CD8-positive, alpha-beta T cell (primary cell): ENCODE measurements at regions of chr7 and their contacts with region 1.

Region 1: DNA sequence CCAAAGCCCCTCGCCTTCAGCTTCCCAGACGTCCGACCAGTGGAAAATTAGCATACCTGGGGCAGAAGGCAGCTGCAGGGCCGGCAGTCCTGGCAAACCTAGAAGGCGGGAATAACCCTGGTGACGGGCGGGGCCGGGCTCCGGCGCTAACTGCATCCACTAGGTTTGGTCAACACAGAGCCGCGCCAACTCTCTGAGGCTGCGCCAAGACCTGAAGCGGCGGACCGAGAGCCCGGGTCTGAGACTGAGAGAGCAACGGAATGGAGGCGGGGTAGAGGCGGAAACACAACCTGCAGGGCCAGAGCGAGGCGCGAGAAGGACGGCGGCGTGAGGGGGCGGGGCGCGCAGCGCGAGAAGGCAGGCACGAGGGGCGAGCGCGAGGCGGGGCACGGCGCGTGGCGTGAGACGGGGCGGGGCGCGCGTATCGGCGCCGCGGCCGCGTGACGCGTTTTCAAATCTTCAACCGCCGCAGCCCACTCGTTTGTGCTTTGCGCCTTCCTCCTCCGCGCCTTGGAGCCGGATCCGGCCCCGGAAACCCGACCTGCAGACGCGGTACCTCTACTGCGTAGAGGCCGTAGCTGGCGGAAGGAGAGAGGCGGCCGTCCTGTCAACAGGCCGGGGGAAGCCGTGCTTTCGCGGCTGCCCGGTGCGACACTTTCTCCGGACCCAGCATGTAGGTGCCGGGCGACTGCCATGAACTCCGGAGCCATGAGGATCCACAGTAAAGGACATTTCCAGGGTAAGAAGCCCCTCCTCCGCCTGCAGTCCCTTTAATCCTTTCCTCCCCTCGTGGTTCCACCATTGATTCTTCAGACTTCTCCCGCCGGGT is at the starts of genes DBF4 and SLC25A40:
- DNase-seq: peak; percentile 87 to 98 (median 95)
- ATAC-seq: peak; percentile 90
- H3K4me3 ChIP-seq: peak within 1 kb of the TSS; percentile 85 to 91
- H3K4me3 Mint-ChIP-seq: peak within 1 kb of the TSS; percentile 94
- H3K27ac ChIP-seq: peak within 1 kb of the TSS; percentile 93 to 95
- H3K27ac Mint-ChIP-seq: peak within 1 kb of the TSS; percentile 97
- H3K4me1 ChIP-seq: peaks cover 31% of the 10 kb centered on the region
- H3K4me1 Mint-ChIP-seq: peaks cover 57% of the 10 kb centered on the region
- H3K27me3 ChIP-seq: no peaks in the 10 kb centered on the region
- H3K27me3 Mint-ChIP-seq: no peaks in the 10 kb centered on the region
- CTCF ChIP-seq: no peak
- total RNA-seq, gene DBF4: 75.6 to 81.6 TPM
- total RNA-seq, gene SLC25A40: 6.2 to 6.9 TPM

Region 2: DNA sequence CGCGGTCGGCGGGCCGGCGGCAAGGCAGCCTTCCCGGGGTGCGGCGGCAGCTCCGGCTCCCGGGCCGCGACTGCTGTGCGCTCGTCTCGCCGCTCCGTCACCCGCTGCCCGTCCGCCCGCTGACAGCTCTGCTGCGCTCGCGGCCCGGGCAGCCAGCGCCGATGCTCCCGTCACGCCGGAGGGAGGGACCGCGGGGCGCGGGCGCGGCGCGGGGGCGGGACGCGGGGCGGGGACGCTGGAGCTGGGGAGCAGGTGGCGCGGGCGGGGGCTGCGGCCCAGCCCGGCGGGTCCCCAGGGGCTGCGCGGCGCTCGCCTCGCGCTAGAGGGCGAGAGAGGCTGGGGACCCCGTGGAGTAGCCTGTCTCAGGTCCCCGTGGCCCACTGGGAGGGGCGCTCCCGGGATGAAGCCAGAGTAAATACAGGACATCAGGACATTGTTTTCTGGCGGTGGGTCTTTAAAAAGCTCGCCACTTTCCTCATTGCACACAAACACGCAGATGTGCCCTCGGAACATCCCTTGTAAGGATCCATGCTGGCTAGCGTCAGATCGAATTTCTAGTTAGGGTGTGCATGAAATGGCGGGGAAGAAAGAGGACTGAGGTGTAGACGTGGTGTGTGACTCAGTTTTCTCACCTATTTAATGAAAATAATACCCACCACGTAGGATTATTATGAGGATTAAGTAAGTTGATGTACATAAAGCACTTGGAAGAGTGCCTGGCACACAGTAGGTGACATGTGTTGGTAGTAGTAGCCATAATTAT is 816.5 kb before region 1 on chr7 and contains the start of gene ELAPOR2:
- CTCF ChIA-PET with region 1: no interaction called
- POLR2A ChIA-PET with region 1: no interaction called
- intact Hi-C with region 1: loop called in 1 of 2 experiments (anchors 2 kb)
- DNase-seq: peak; percentile 64 to 89 (median 80)
- ATAC-seq: peak; percentile 94
- H3K4me3 ChIP-seq: peak within 1 kb of the TSS; percentile 43 to 62
- H3K4me3 Mint-ChIP-seq: peak within 1 kb of the TSS; percentile 87
- H3K27ac ChIP-seq: peak within 1 kb of the TSS; percentile 16 to 38
- H3K27ac Mint-ChIP-seq: peak within 1 kb of the TSS; percentile 77
- H3K4me1 ChIP-seq: peaks cover 10% of the 10 kb centered on the region
- H3K4me1 Mint-ChIP-seq: peaks cover 16% of the 10 kb centered on the region
- H3K27me3 ChIP-seq: no peaks in the 10 kb centered on the region
- H3K27me3 Mint-ChIP-seq: peaks cover 5% of the 10 kb centered on the region
- CTCF ChIP-seq: no peak
- total RNA-seq, gene ELAPOR2: 5.1 to 5.7 TPM

Region 3: GRCh38 chr7:87159538-87159937 is 716.7 kb before region 1 on chr7:
- CTCF ChIA-PET with region 1: no interaction called
- POLR2A ChIA-PET with region 1: no interaction called
- intact Hi-C with region 1: loop called (anchors 5 kb)
- DNase-seq: no peak
- ATAC-seq: no peak
- H3K4me3 ChIP-seq: no peak overlapping the region
- H3K4me3 Mint-ChIP-seq: no peak overlapping the region
- H3K27ac ChIP-seq: no peak overlapping the region
- H3K27ac Mint-ChIP-seq: peak overlapping the region; percentile 19
- H3K4me1 ChIP-seq: peaks cover 31% of the 10 kb centered on the region
- H3K4me1 Mint-ChIP-seq: peaks cover 72% of the 10 kb centered on the region
- H3K27me3 ChIP-seq: no peaks in the 10 kb centered on the region
- H3K27me3 Mint-ChIP-seq: no peaks in the 10 kb centered on the region
- CTCF ChIP-seq: no peak

Region 4: GRCh38 chr7:87628780-87629569 is 247.3 kb before region 1 on chr7:
- CTCF ChIA-PET with region 1: no interaction called
- POLR2A ChIA-PET with region 1: no interaction called
- intact Hi-C with region 1: loop called in 1 of 2 experiments (anchors 1 kb)
- DNase-seq: peak; percentile 1 to 61 (median 24)
- ATAC-seq: peak; percentile 15
- H3K4me3 ChIP-seq: peak overlapping the region; percentile 73 to 89
- H3K4me3 Mint-ChIP-seq: peak overlapping the region; percentile 80
- H3K27ac ChIP-seq: peak overlapping the region in 1 of 2 experiments; percentile 7
- H3K27ac Mint-ChIP-seq: peak overlapping the region; percentile 78
- H3K4me1 ChIP-seq: peaks cover 3% of the 10 kb centered on the region
- H3K4me1 Mint-ChIP-seq: peaks cover 12% of the 10 kb centered on the region
- H3K27me3 ChIP-seq: no peaks in the 10 kb centered on the region
- H3K27me3 Mint-ChIP-seq: no peaks in the 10 kb centered on the region
- CTCF ChIP-seq: no peak

Region 5: GRCh38 chr7:87886875-87887274 is 10.6 kb after region 1 on chr7:
- CTCF ChIA-PET with region 1: interaction called, 6 read pairs
- POLR2A ChIA-PET with region 1: interaction called, 9 read pairs
- intact Hi-C with region 1: loop called in 1 of 2 experiments (anchors 1 kb)
- DNase-seq: peak in 2 of 9 experiments; percentile 50 to 63
- ATAC-seq: no peak
- H3K4me3 ChIP-seq: no peak overlapping the region
- H3K4me3 Mint-ChIP-seq: no peak overlapping the region
- H3K27ac ChIP-seq: no peak overlapping the region
- H3K27ac Mint-ChIP-seq: no peak overlapping the region
- H3K4me1 ChIP-seq: no peaks in the 10 kb centered on the region
- H3K4me1 Mint-ChIP-seq: peaks cover 9% of the 10 kb centered on the region
- H3K27me3 ChIP-seq: no peaks in the 10 kb centered on the region
- H3K27me3 Mint-ChIP-seq: no peaks in the 10 kb centered on the region
- CTCF ChIP-seq: peak; percentile 72

Region 6: DNA sequence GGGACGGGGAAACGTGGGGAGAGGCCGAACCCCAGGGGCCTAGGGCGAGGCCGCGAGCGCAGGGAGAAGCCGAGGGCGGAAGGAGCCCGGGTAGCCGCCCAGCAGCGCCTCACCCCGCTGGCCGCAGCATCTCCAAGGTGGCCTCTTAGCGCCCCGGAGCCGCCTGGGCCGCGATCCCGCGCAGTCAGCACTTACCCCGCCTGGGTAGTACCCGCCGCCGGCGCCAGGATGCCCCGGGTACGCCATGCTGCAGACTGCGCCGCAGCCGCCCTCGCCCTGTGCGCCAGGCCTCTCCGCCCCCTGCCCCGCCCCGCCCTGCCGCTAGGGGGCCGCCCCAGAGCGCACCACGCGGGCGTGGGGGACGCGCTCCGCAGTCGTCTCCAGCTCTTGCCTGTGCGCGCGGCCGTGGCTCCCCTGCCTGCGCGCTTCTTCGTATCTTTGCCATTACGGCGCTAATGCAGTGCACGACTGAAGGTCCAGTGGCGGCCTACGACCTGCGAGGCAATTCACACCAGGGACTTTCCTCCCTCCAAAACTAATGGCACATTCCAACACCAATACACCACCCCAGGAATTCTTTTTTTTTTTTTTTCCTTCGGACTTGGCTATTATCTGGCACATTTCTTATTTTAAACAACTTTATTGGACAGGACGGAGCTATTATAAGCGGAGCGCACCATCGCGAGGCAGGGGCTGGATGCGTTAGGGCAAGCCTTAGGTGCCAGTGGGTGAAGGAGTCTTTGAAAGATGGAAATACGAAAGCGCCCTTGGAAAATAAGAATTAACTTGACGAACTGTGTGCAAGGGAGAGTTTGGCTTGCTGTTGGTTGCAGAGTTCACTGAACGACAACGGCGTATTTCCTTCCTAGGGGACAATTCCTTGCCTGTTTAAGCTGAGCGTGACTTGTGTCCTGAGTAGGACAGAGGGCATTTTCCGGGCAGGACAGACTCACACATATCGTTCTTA is 343.8 kb after region 1 on chr7 and contains the start of gene SRI:
- CTCF ChIA-PET with region 1: no interaction called
- POLR2A ChIA-PET with region 1: no interaction called
- intact Hi-C with region 1: loop called (anchors 1 kb)
- DNase-seq: peak; percentile 87 to 95 (median 92)
- ATAC-seq: peak; percentile 97
- H3K4me3 ChIP-seq: peak within 1 kb of the TSS; percentile 81 to 86
- H3K4me3 Mint-ChIP-seq: peak within 1 kb of the TSS; percentile 95
- H3K27ac ChIP-seq: peak within 1 kb of the TSS; percentile 73 to 83
- H3K27ac Mint-ChIP-seq: peak within 1 kb of the TSS; percentile 97
- H3K4me1 ChIP-seq: peaks cover 21% of the 10 kb centered on the region
- H3K4me1 Mint-ChIP-seq: peaks cover 34% of the 10 kb centered on the region
- H3K27me3 ChIP-seq: no peaks in the 10 kb centered on the region
- H3K27me3 Mint-ChIP-seq: no peaks in the 10 kb centered on the region
- CTCF ChIP-seq: peak; percentile 97
- total RNA-seq, gene SRI: 38.5 to 43.9 TPM

Region 7: GRCh38 chr7:88540012-88540411 is 663.8 kb after region 1 on chr7:
- CTCF ChIA-PET with region 1: no interaction called
- POLR2A ChIA-PET with region 1: no interaction called
- intact Hi-C with region 1: no loop called
- DNase-seq: no peak
- ATAC-seq: no peak
- H3K4me3 ChIP-seq: no peak overlapping the region
- H3K4me3 Mint-ChIP-seq: no peak overlapping the region
- H3K27ac ChIP-seq: no peak overlapping the region
- H3K27ac Mint-ChIP-seq: no peak overlapping the region
- H3K4me1 ChIP-seq: no peaks in the 10 kb centered on the region
- H3K4me1 Mint-ChIP-seq: no peaks in the 10 kb centered on the region
- H3K27me3 ChIP-seq: no peaks in the 10 kb centered on the region
- H3K27me3 Mint-ChIP-seq: no peaks in the 10 kb centered on the region
- CTCF ChIP-seq: no peak